ENCODE measurements at regions of chr2 and their contacts with region 1.

Region 1: GRCh38 chr2:44462934-44463849 is 101.4 kb downstream of the CAMKMT start:
- DNase-seq: no peak
- ATAC-seq: no peak
- H3K4me3 ChIP-seq: no peak overlapping the region
- H3K4me3 Mint-ChIP-seq: no peak overlapping the region
- H3K27ac ChIP-seq: no peak overlapping the region
- H3K27ac Mint-ChIP-seq: no peak overlapping the region
- H3K4me1 ChIP-seq: no peaks in the 10 kb centered on the region
- H3K4me1 Mint-ChIP-seq: no peaks in the 10 kb centered on the region
- H3K27me3 ChIP-seq: no peaks in the 10 kb centered on the region
- H3K27me3 Mint-ChIP-seq: no peaks in the 10 kb centered on the region

Region 2: GRCh38 chr2:44429034-44429433 is 34.2 kb before region 1 on chr2:
- CTCF ChIA-PET with region 1: no interaction called
- POLR2A ChIA-PET with region 1: no interaction called
- DNase-seq: no peak
- ATAC-seq: no peak
- H3K4me3 ChIP-seq: no peak overlapping the region
- H3K4me3 Mint-ChIP-seq: no peak overlapping the region
- H3K27ac ChIP-seq: no peak overlapping the region
- H3K27ac Mint-ChIP-seq: no peak overlapping the region
- H3K4me1 ChIP-seq: peaks cover 0 to 2% of the 10 kb centered on the region in 2 experiments
- H3K4me1 Mint-ChIP-seq: peaks cover 6 to 19% (median 19%) of the 10 kb centered on the region in 3 donors
- H3K27me3 ChIP-seq: no peaks in the 10 kb centered on the region
- H3K27me3 Mint-ChIP-seq: no peaks in the 10 kb centered on the region

Region 3: DNA sequence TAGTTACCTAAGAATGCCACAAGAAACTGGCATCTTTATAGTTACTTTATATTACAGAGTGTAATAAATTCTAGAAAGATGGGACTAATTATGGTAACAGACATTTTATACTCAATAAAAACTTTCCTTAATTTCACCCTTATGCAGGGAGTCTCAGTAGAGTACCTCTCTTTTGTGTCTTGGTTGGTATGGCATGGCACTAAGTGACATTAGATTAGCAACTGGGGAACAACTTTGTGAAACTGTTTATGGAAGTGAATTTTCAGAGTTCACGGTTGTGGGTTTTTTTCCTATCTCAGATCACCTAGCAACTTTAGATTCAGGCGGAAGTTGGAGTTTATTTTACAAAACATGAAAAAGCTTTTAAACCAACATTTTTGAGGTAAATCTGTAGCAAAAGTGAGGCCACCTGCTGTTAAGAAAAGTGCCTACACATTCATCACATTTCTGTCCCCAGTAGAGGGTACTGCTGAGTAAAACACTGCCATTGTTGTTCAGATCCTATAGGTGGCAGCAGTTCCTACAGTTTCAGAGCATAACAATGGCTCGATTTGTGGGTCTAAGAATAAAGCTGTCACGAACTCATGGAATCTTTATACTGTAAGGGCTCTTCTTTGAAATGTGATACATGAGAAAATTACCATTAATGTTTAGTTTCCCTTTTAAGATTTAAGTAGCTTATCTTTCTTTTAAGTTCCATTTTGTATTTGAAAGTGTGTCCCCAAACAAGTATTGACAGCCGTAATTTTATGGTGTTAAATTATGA is 16.1 kb after region 1 on chr2:
- CTCF ChIA-PET with region 1: interaction called, 9 to 15 read pairs
- POLR2A ChIA-PET with region 1: no interaction called
- DNase-seq: peak in 31 of 35 experiments; percentile 0 to 81 (median 30)
- ATAC-seq: peak; percentile 99 to 100 (median 100)
- H3K4me3 ChIP-seq: no peak overlapping the region
- H3K4me3 Mint-ChIP-seq: no peak overlapping the region
- H3K27ac ChIP-seq: no peak overlapping the region
- H3K27ac Mint-ChIP-seq: no peak overlapping the region
- H3K4me1 ChIP-seq: no peaks in the 10 kb centered on the region
- H3K4me1 Mint-ChIP-seq: peaks cover 7 to 10% (median 8%) of the 10 kb centered on the region in 3 donors
- H3K27me3 ChIP-seq: no peaks in the 10 kb centered on the region
- H3K27me3 Mint-ChIP-seq: no peaks in the 10 kb centered on the region

Region 4: DNA sequence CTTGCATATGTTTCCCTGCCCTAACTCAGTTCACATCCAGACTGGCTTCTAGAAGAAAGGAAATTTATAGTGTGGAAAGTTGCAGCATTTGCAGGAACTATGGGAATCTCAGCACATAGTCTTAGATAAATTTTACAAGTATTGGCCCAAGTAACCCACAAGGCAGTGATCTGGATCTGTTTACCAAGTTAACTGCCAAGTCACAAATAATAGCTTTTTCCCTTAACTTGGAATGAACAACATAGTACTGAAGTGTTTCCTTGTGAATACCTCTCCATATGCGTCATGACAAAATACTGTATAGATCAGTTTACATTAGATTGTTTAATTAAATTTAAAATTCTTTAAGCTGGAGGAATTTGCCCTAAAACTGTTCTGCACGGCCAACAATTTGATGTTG is 1578.2 kb after region 1 on chr2:
- CTCF ChIA-PET with region 1: no interaction called
- POLR2A ChIA-PET with region 1: no interaction called
- DNase-seq: no peak
- ATAC-seq: no peak
- H3K4me3 ChIP-seq: no peak overlapping the region
- H3K4me3 Mint-ChIP-seq: no peak overlapping the region
- H3K27ac ChIP-seq: no peak overlapping the region
- H3K27ac Mint-ChIP-seq: no peak overlapping the region
- H3K4me1 ChIP-seq: no peaks in the 10 kb centered on the region
- H3K4me1 Mint-ChIP-seq: no peaks in the 10 kb centered on the region
- H3K27me3 ChIP-seq: no peaks in the 10 kb centered on the region
- H3K27me3 Mint-ChIP-seq: no peaks in the 10 kb centered on the region